OCI-LY7 (cell line): ENCODE measurements at regions of chr12 and their contacts with region 1.

Region 1: DNA sequence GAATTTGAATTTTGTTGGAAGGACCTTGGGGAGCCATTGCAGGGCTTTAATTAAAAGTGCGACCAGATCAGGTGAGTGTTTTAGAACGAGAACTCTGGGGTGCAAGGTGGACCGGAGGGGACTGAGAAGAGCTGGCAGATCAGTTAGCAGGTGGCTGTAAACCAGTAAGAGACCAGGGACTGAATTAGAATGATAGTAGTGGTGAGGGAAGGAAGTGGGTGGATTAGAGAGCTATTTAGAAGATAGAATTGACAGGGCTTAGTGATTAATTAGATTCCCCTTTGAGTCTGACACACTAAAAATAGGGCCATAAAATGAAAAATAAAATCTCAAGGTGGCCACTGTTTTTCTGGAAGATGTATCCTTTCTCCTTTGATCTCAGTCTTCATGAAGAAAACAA is 44.8 kb downstream of the PLXNC1 start:
- DNase-seq: peak; percentile 74
- H3K4me3 ChIP-seq: no peak overlapping the region
- H3K27ac ChIP-seq: peak overlapping the region; percentile 73
- H3K4me1 ChIP-seq: peaks cover 17% of the 10 kb centered on the region
- CTCF ChIP-seq: no peak

Region 2: GRCh38 chr12:94126067-94126466 is 67.1 kb before region 1 on chr12:
- CTCF ChIA-PET with region 1: no interaction called
- POLR2A ChIA-PET with region 1: no interaction called
- intact Hi-C with region 1: no loop called
- DNase-seq: no peak
- H3K4me3 ChIP-seq: no peak overlapping the region
- H3K27ac ChIP-seq: no peak overlapping the region
- H3K4me1 ChIP-seq: peaks cover 10% of the 10 kb centered on the region
- CTCF ChIP-seq: no peak

Region 3: DNA sequence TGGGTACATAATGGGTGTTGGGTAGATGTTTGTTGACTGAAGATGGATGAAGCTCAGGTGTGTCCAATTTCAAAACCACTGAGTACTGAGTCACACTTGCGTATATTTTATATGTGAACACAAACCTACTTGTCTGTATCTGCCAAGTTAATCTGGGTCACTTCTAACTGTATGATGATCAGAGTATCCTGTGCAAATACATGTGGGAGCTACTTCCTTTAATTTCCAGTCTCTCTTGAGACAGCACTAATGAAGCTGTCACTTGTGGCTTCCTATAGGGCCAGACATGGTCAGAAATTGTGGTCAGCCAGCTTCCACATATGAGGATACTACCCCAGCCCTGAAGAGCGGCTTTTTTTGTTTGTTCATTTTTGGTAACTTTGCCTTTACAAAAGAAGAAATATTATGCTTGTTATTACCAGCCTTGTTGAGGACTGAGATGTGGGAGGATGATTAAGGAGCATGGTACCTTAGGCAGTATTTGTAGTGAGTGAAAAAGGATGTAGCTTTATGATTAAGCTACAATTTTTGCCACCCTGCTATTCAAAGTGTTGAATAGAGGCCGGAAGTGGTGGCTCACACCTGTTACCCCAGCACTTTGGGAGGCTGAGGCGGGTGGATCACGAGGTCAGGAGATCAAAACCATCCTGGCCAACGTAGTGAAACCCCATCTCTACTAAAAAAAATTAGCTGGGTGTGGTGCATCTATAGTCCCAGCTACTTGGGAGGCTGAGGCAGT is 12.4 kb before region 1 on chr12:
- CTCF ChIA-PET with region 1: interaction called, 4 read pairs
- POLR2A ChIA-PET with region 1: interaction called, 21 read pairs
- intact Hi-C with region 1: no loop called
- DNase-seq: no peak
- H3K4me3 ChIP-seq: no peak overlapping the region
- H3K27ac ChIP-seq: no peak overlapping the region
- H3K4me1 ChIP-seq: peaks cover 7% of the 10 kb centered on the region
- CTCF ChIP-seq: no peak

Region 4: GRCh38 chr12:94230357-94230905 is 37.3 kb after region 1 on chr12:
- CTCF ChIA-PET with region 1: no interaction called
- POLR2A ChIA-PET with region 1: no interaction called
- intact Hi-C with region 1: no loop called
- DNase-seq: peak; percentile 33
- H3K4me3 ChIP-seq: no peak overlapping the region
- H3K27ac ChIP-seq: no peak overlapping the region
- H3K4me1 ChIP-seq: peaks cover 20% of the 10 kb centered on the region
- CTCF ChIP-seq: no peak

Region 5: DNA sequence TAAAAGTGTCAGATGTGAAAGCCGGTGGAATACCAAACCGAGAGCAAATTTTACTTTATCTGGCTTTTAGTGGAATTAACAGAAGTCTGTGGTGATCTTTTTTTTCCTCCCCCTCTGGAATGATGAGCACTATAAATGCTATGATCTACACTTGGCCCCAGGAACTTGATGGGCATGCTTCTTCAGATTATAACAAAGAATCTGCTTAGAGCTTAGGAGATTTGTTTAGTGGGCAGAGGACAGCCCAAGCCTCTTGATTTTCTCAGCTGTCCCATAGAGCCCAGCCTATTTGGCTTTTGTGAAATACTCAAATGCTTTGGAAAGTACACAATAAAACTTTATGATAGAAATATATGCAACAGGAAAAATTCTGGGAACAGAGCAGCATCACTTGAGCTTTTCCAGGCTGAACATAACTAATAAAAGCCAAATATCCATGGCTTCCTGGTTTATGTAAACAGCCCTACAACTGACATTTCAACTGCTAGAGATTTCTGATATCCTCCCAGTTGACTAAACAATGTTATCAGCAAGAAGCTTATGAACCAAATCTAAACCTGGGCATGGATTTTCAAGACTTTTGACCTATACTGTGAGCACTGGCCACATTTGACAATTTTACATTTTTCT is 104.8 kb after region 1 on chr12:
- CTCF ChIA-PET with region 1: no interaction called
- POLR2A ChIA-PET with region 1: no interaction called
- intact Hi-C with region 1: no loop called
- DNase-seq: no peak
- H3K4me3 ChIP-seq: no peak overlapping the region
- H3K27ac ChIP-seq: no peak overlapping the region
- H3K4me1 ChIP-seq: no peaks in the 10 kb centered on the region
- CTCF ChIP-seq: no peak